WTC11 (cell line): ENCODE measurements at regions of chr5 and their contacts with region 1.

Region 1: GRCh38 chr5:146296245-146296644 is 42.4 kb upstream of the POU4F3 start:
- DNase-seq: no peak
- ATAC-seq: no peak
- H3K4me3 Mint-ChIP-seq: no peak overlapping the region
- H3K27ac Mint-ChIP-seq: no peak overlapping the region
- H3K4me1 Mint-ChIP-seq: no peaks in the 10 kb centered on the region
- H3K27me3 Mint-ChIP-seq: no peaks in the 10 kb centered on the region
- CTCF ChIP-seq: no peak

Region 2: DNA sequence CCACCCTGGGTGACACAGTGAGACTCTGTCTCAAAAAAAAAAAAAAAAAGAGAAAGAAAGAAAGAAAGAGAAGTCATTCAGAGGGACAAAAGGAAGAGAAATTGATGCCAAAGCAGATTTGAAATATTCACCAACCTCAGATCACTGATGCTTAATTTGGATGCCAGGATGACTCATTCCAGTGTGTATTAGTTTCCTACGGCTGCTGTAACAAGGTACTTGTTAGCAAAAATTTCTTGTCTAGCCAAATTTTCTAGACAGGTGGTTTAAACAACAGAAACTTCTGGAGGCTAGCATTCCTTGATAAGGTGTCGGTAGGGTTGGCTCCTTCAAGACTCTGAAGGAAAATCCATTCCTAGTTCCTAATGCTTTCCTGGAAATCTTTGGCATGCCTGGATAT is 84.5 kb after region 1 on chr5:
- CTCF ChIA-PET with region 1: no interaction called
- POLR2A ChIA-PET with region 1: no interaction called
- DNase-seq: no peak
- ATAC-seq: no peak
- H3K4me3 Mint-ChIP-seq: no peak overlapping the region
- H3K27ac Mint-ChIP-seq: no peak overlapping the region
- H3K4me1 Mint-ChIP-seq: no peaks in the 10 kb centered on the region
- H3K27me3 Mint-ChIP-seq: peaks cover 13% of the 10 kb centered on the region
- CTCF ChIP-seq: no peak

Region 3: DNA sequence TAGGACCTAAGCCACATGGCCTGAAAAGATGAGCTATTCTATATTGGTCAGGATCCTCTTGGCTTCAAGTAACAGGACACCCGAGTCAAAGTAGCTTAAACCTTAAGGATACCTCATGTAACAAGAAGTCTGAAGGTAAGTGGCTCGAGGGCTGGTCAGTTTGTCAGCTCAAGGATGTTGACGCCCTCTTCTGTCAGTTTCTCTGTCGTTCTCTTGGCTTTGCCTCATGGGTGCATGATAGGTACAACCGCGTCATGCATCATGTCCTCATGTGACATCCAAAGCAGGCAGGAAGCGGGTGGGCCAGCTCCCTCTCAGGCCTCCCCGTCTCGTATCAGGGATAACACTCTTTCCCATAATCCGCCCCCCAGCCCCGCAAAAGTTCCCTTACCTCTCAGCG is 128.8 kb after region 1 on chr5:
- CTCF ChIA-PET with region 1: interaction called, 10 read pairs
- POLR2A ChIA-PET with region 1: no interaction called
- DNase-seq: no peak
- ATAC-seq: peak; percentile 87
- H3K4me3 Mint-ChIP-seq: no peak overlapping the region
- H3K27ac Mint-ChIP-seq: no peak overlapping the region
- H3K4me1 Mint-ChIP-seq: no peaks in the 10 kb centered on the region; the same call in 1 of the 2 replicates
- H3K27me3 Mint-ChIP-seq: no peaks in the 10 kb centered on the region
- CTCF ChIP-seq: no peak

Region 4: GRCh38 chr5:146565764-146566367 is 269.6 kb after region 1 on chr5:
- CTCF ChIA-PET with region 1: no interaction called
- POLR2A ChIA-PET with region 1: no interaction called
- DNase-seq: peak; percentile 69
- ATAC-seq: peak; percentile 98
- H3K4me3 Mint-ChIP-seq: no peak overlapping the region
- H3K27ac Mint-ChIP-seq: 0 out of 2 replicates have a peak overlapping the region, but pooled peaks have one; percentile 44
- H3K4me1 Mint-ChIP-seq: peaks cover under 1% of the 10 kb centered on the region
- H3K27me3 Mint-ChIP-seq: no peaks in the 10 kb centered on the region
- CTCF ChIP-seq: peak; percentile 44; the same call in 1 of the 2 replicates

Region 5: GRCh38 chr5:146765089-146765832 is 469.0 kb after region 1 on chr5:
- CTCF ChIA-PET with region 1: no interaction called
- POLR2A ChIA-PET with region 1: no interaction called
- DNase-seq: no peak
- ATAC-seq: no peak
- H3K4me3 Mint-ChIP-seq: no peak overlapping the region
- H3K27ac Mint-ChIP-seq: no peak overlapping the region
- H3K4me1 Mint-ChIP-seq: no peaks in the 10 kb centered on the region
- H3K27me3 Mint-ChIP-seq: no peaks in the 10 kb centered on the region
- CTCF ChIP-seq: no peak